WTC11 (cell line): ENCODE measurements at regions of chr2 and their contacts with region 1.

Region 1: DNA sequence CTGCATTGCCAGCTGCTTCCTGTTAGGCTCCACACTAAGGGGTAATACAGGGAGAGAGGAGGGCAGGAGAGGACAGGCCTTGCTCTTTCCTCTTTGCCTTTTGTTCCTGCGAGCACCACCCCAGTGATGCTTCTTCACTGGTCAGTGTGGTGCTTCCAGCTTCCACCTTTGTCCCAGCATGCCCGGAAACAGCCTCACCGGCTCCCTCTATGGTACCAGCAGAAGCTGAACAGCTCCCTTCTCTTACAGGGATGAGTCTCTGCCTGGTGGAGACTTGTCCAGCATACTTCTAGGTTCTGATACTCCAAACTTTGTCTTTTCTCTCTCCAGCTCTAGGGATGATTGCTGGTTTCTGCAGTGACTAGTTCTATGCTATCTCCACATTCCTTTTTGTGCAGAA is 413.3 kb downstream of the TSN start:
- DNase-seq: peak; percentile 52
- ATAC-seq: peak; percentile 97
- H3K4me3 Mint-ChIP-seq: no peak overlapping the region
- H3K27ac Mint-ChIP-seq: no peak overlapping the region
- H3K4me1 Mint-ChIP-seq: no peaks in the 10 kb centered on the region
- H3K27me3 Mint-ChIP-seq: no peaks in the 10 kb centered on the region
- CTCF ChIP-seq: 0 out of 2 replicates have a peak, but pooled peaks have one; percentile 22

Region 2: GRCh38 chr2:122156176-122156890 is 12.5 kb before region 1 on chr2:
- CTCF ChIA-PET with region 1: interaction called, 11 read pairs
- POLR2A ChIA-PET with region 1: no interaction called
- DNase-seq: no peak
- ATAC-seq: no peak
- H3K4me3 Mint-ChIP-seq: no peak overlapping the region
- H3K27ac Mint-ChIP-seq: no peak overlapping the region
- H3K4me1 Mint-ChIP-seq: peaks cover 12% of the 10 kb centered on the region
- H3K27me3 Mint-ChIP-seq: no peaks in the 10 kb centered on the region; the same call in 1 of the 2 replicates
- CTCF ChIP-seq: no peak